Common myeloid progenitor, CD34-positive (primary cell): ENCODE measurements at regions of chr2 and their contacts with region 1.

Region 1: DNA sequence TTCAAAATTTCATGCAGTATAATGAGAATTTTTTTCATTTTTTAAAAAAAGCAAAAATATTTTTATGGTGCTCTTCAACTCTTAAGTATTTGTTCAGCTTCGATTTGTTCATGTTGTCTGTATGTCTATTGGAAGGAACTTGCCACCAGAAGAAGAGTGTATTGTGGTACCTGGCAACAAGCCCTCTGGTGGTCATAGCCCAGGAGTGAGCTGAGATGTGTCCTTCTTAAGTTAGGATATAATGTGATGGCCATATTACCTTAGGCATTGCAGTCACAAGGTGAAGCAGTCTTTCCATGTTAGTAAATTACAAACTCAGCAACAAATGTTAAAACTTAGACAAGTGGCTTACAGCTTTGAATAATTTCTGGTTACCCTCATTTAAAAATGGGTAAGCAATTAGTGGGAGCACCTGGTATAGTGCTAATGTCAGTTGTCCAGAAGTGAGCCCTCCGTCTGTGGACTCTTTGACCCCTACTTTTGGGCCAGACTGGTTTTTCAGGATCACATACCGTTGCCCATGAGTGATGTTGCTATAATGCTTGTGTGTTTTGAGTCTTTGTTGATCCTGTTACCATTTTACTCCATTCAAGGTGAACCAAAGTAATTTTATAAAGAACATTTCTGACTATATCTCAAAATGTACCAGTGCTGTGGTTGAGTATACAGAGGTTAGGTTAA is 57.4 kb downstream of the MYO1B start:
- DNase-seq: peak; percentile 35 to 64 (median 63)
- H3K4me3 ChIP-seq: no peak overlapping the region
- H3K27ac ChIP-seq: no peak overlapping the region
- H3K4me1 ChIP-seq: no peaks in the 10 kb centered on the region
- H3K27me3 ChIP-seq: no peaks in the 10 kb centered on the region

Region 2: GRCh38 chr2:191291471-191291870 is 11.1 kb before region 1 on chr2:
- CTCF ChIA-PET with region 1: interaction called, 11 read pairs
- POLR2A ChIA-PET with region 1: no interaction called
- DNase-seq: no peak
- H3K4me3 ChIP-seq: no peak overlapping the region
- H3K27ac ChIP-seq: no peak overlapping the region
- H3K4me1 ChIP-seq: peaks cover 0 to 3% (median 0%) of the 10 kb centered on the region in 4 experiments
- H3K27me3 ChIP-seq: no peaks in the 10 kb centered on the region

Region 3: DNA sequence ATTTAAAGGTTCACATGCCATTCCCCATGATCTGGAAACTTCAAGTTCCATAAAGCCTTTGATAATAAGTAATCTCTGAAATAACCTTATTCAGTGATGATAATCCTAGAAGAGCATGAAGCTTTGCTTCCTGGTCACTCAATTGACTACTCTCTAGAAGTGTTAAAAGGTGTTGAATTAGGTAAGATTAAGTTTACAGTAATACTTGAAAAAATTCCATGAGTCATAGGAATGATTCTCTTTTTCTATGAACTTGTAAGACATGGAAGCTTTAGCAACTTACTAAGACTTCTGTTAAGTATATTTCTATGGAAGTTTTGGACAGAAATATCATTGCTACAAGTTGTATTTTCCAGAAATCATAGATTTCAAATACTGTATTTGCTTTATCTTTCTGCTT is 43.2 kb after region 1 on chr2:
- CTCF ChIA-PET with region 1: no interaction called
- POLR2A ChIA-PET with region 1: no interaction called
- DNase-seq: no peak
- H3K4me3 ChIP-seq: no peak overlapping the region
- H3K27ac ChIP-seq: no peak overlapping the region
- H3K4me1 ChIP-seq: no peaks in the 10 kb centered on the region
- H3K27me3 ChIP-seq: no peaks in the 10 kb centered on the region